Activated T-helper 1 cell treated with anti-CD3 and anti-CD28 coated beads, Interleukin-12 subunit alpha, Interleukin-12 subunit beta, Interleukin-2, Interleukin-4 antibody, amounts not matched to agents 30 ng/mL and 10 ng/mL and 1 ng/mL, durations not matched to agents 14 hours and 24 hours and 36 hours (primary cell): ENCODE measurements at regions of chr3 and their contacts with region 1.

Region 1: DNA sequence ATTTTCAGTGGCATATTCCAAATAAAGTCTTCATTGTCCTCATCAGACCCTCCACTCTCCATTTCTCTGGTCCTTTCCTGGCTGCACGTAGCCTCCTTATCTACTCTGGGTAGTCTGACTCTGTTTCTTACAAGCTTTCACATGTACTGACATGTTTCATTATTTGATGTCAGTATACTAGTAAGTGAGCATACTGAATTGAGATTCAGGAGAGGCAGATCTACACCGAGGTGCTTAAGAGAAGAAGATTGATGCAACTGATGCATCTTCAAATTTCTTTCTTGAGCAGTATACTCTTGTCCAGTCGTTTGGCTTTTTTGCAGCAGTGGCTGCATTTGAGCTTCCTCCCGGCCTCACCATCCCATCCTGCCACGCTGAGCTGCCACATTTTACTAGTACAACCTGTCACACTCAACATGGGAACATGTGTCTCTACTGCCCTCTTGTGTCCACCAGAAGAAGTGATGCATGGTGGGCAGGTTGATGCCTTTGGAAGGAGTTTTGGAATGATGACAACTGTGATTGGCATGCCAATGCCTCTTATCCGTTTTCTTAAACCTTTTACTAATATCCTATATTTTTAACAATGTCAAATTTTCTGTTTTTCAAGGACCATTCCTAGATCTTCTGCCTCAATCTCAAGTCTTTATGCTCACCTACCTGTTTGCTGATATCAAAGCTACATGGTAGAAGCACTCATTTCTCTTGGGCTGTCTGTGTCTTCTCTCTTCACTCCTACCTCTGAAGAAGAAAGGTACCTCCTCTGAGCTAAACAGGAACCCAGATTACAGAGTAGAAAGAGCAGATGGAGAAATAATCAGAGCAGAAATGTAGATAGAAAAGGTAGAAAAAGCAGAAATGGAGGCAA is 38.7 kb downstream of the GUCA1C start:
- DNase-seq: peak; percentile 56
- H3K4me3 Mint-ChIP-seq: peak overlapping the region; percentile 12
- H3K27ac Mint-ChIP-seq: peak overlapping the region; percentile 61
- H3K4me1 Mint-ChIP-seq: peaks cover 18% of the 10 kb centered on the region
- H3K27me3 Mint-ChIP-seq: peaks cover 15% of the 10 kb centered on the region

Region 2: GRCh38 chr3:108489771-108490170 is 425.2 kb before region 1 on chr3:
- intact Hi-C with region 1: loop called (anchors 1 kb)
- DNase-seq: no peak
- H3K4me3 Mint-ChIP-seq: no peak overlapping the region
- H3K27ac Mint-ChIP-seq: no peak overlapping the region
- H3K4me1 Mint-ChIP-seq: peaks cover 4% of the 10 kb centered on the region
- H3K27me3 Mint-ChIP-seq: peaks cover 5% of the 10 kb centered on the region

Region 3: GRCh38 chr3:108662130-108662738 is 252.8 kb before region 1 on chr3:
- intact Hi-C with region 1: loop called (anchors 1 kb)
- DNase-seq: peak; percentile 17
- H3K4me3 Mint-ChIP-seq: no peak overlapping the region
- H3K27ac Mint-ChIP-seq: no peak overlapping the region
- H3K4me1 Mint-ChIP-seq: peaks cover 17% of the 10 kb centered on the region
- H3K27me3 Mint-ChIP-seq: no peaks in the 10 kb centered on the region

Region 4: DNA sequence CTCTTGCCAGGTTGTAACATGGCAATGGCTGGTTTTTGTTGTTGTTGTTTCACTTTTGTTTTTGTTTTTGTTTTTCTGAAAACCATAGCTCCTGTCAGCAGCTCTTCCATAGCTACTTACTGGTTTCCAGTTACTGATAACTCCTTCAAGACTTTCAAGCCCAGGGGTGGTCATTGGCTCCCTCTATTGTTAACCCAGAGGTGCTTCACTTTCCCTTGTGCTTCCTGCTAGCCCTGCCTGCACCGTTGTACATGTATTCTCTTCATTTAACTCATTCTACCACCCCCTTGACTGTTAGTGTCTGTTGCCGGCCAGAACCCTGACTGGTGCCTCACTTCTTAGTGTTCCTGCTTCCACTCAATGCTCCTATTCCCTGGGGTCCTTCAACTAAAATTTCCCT is 96.6 kb before region 1 on chr3:
- intact Hi-C with region 1: loop called (anchors 1 kb)
- DNase-seq: peak; percentile 60
- H3K4me3 Mint-ChIP-seq: peak overlapping the region; percentile 58
- H3K27ac Mint-ChIP-seq: peak overlapping the region; percentile 18
- H3K4me1 Mint-ChIP-seq: peaks cover 45% of the 10 kb centered on the region
- H3K27me3 Mint-ChIP-seq: no peaks in the 10 kb centered on the region

Region 5: GRCh38 chr3:108897883-108898282 is 17.1 kb before region 1 on chr3:
- intact Hi-C with region 1: loop called (anchors 1 kb)
- DNase-seq: no peak
- H3K4me3 Mint-ChIP-seq: no peak overlapping the region
- H3K27ac Mint-ChIP-seq: peak overlapping the region; percentile 37
- H3K4me1 Mint-ChIP-seq: peaks cover 18% of the 10 kb centered on the region
- H3K27me3 Mint-ChIP-seq: no peaks in the 10 kb centered on the region